Activated T-helper 2 cell treated with anti-CD3 and anti-CD28 coated beads, Interferon-gamma antibody, Interleukin-2, Interleukin-4, amounts not matched to agents 10 μg/mL and 5 μg/mL and 100 μg/mL, durations not matched to agents 14 hours and 24 hours and 36 hours (primary cell): ENCODE measurements at regions of chr15 and their contacts with region 1.

Region 1: GRCh38 chr15:65400760-65401610 is 21.8 kb downstream of the IGDCC4 start:
- DNase-seq: peak; percentile 26
- H3K4me3 Mint-ChIP-seq: no peak overlapping the region
- H3K27ac Mint-ChIP-seq: no peak overlapping the region
- H3K4me1 Mint-ChIP-seq: peaks cover 5% of the 10 kb centered on the region
- H3K27me3 Mint-ChIP-seq: peaks cover 44% of the 10 kb centered on the region

Region 2: DNA sequence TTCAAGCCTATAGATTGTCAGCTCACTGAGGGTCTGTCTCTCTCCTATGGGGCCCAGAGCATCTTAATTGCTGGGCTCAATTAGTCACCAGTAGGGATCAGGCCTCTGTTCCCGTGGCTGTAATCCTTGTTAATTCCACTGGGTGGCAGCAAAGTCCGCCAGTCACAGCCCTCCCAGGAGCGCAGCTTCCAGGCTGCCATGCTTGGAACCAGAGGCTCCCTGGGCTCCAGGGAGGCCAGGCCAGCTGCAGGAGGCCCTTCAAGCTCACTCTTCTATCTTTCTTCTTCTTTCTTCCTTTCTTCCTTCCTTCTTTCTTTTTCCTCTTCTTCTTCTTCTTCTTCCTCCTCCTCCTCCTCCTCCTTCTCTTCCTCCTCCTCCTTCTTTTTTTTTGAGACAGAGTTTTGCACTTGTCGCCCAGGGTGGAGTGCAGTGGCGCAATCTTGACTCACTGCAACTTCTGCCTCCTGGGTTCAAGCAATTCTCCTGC is 82.1 kb before region 1 on chr15:
- intact Hi-C with region 1: loop called (anchors 5 kb)
- DNase-seq: peak; percentile 66
- H3K4me3 Mint-ChIP-seq: no peak overlapping the region
- H3K27ac Mint-ChIP-seq: no peak overlapping the region
- H3K4me1 Mint-ChIP-seq: no peaks in the 10 kb centered on the region
- H3K27me3 Mint-ChIP-seq: peaks cover 10% of the 10 kb centered on the region

Region 3: GRCh38 chr15:65384895-65385858 is 15.8 kb before region 1 on chr15:
- intact Hi-C with region 1: loop called (anchors 2 kb)
- DNase-seq: peak; percentile 75
- H3K4me3 Mint-ChIP-seq: peak overlapping the region; percentile 85
- H3K27ac Mint-ChIP-seq: peak overlapping the region; percentile 85
- H3K4me1 Mint-ChIP-seq: peaks cover 4% of the 10 kb centered on the region
- H3K27me3 Mint-ChIP-seq: peaks cover 27% of the 10 kb centered on the region

Region 4: DNA sequence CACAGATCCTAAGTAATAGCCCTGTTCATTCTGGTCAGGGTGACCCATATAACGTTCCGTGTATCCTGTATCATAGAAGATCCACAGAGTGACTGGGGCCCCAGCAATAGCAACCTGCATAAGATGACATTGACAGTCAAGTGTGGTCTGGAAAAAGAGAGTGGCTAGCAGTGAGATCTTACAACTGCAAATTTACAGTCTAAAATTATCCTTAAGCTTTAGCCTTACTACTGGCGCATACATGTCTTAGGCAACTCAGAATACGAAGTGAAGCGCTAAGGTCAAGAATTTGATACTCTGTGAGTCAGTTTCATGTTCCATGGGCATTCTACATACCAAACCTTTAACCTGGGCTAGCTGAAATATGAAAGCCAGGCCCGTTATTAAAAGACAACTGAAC is 51.0 kb after region 1 on chr15:
- intact Hi-C with region 1: no loop called
- DNase-seq: no peak
- H3K4me3 Mint-ChIP-seq: no peak overlapping the region
- H3K27ac Mint-ChIP-seq: no peak overlapping the region
- H3K4me1 Mint-ChIP-seq: no peaks in the 10 kb centered on the region
- H3K27me3 Mint-ChIP-seq: no peaks in the 10 kb centered on the region